ENCODE measurements at regions of chr12 and their contacts with region 1.

Region 1: DNA sequence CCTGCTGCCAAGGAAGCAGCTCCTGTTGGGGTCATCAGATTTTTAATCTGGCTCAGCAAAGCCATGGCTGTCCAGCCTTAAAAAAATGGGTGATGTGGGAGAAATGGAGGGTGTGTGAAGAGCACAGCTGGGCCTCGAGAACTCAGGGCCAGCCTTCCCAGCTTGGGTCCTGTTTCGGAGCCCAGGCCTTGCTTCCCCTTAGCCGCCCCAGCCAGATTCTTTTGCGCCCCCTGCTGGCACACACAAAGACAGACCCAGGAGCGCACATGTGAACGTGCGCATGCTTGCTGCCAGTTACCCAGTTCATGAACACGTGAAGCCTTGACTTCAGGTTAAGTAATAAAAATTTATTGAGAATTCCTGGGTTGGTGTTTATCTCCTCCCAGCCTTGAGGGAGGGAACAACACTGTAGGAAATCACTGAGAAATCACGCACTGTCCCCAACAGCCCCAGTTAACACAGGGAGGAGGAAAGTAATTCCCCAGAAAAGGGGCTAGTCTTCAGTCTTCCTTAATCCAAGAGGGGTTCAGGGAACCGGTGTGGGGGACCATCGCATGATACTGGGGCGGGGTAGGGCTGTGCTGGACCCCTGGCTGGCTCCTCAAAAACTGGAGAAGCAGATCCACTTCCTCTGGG is 5.3 kb downstream of the PHB2 start:
- DNase-seq: peak; percentile 96

Region 2: GRCh38 chr12:6688999-6689882 is 275.9 kb before region 1 on chr12 and contains the start of gene ZNF384:
- intact Hi-C with region 1: loop called (anchors 10 kb)
- DNase-seq: peak; percentile 99
- total RNA-seq, gene ZNF384: 32.7 TPM

Region 3: GRCh38 chr12:6925540-6926279 is 39.4 kb before region 1 on chr12:
- intact Hi-C with region 1: loop called (anchors 2 kb)
- DNase-seq: peak; percentile 81

Region 4: DNA sequence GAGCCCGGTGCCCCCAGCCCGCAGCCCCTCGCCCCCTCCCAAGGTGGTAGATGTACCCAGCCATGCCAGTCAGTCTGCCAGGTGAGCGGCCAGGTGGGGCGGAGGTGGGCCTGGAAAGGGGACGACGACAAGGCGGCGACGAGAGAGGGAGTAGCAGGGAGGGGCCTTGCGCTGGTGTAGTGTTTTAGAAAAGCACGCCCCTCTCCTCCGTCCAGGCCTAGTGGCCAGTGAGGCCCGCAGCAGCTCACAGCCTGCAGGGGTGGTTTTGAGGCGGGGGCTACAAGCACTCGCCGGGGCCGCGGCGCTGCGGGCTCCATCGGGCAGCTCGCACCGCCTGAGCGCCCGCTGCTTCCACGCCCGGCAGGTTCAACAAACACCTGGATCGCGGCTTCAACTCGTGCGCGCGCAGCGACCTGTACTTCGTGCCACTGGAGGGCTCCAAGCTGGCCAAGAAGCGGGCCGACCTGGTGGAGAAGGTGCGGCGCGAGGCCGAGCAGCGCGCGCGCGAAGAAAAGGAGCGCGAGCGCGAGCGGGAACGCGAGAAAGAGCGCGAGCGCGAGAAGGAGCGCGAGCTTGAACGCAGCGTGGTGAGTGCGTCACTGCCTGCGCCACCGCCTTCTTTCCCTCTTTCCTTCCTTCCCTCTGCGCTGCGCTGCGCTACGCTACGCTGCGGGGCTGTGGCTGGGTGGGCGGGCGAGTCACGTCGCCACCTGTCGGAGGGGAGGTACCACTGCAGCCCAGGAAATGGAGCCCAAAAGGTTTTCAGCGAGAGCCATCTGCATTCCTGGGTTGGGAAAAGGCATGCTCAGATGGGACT is 27.5 kb before region 1 on chr12:
- intact Hi-C with region 1: loop called (anchors 5 kb)
- DNase-seq: peak; percentile 97

Region 5: DNA sequence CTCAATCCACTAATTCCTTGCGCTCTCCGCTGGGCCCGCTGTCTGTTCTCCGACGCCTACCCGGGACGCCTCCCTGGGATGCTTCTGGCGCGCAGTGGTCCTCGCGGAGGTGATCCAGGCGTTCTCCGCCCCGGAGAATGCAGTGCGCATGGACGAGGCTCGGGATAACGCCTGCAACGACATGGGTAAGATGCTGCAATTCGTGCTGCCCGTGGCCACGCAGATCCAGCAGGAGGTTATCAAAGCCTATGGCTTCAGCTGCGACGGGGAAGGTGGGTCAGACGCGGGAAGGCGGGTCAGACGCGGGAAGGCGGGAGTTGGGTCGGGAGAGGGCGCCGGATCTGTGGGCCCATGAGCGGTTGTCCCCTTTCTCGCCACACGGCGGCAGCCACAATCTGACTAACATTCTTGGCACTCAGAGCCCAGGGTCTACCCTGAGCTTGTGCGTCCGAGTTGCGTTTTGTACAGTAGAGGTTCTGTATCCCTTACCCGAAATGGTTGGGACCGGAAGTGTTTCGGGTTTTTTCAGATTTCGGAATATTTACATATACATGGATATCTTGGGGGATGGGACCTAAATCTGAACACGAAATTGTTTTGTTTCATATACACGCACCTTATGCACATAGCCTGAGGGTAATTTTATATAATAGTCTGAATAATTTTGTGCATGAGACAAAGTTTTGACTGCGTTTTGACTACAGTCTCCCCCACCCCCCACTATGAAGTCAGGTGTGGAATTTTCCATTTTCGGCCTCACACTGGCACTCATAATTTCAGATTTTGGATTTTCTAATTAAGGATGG is 20.6 kb before region 1 on chr12:
- intact Hi-C with region 1: loop called (anchors 1 kb)
- DNase-seq: peak; percentile 95

Region 6: GRCh38 chr12:7018350-7019042 is 53.4 kb after region 1 on chr12 and contains the start of gene LPCAT3:
- intact Hi-C with region 1: loop called (anchors 2 kb)
- DNase-seq: peak; percentile 98
- total RNA-seq, gene LPCAT3: 19.7 TPM

Region 7: GRCh38 chr12:7092229-7092985 is 127.3 kb after region 1 on chr12 and contains the start of gene C1R:
- intact Hi-C with region 1: loop called (anchors 5 kb)
- DNase-seq: peak; percentile 84
- total RNA-seq, gene C1R: 96.9 TPM

Measured in cardiac septum (tissue), 1 donor.